B cell (primary cell): ENCODE measurements at regions of chr11 and their contacts with region 1.

Region 1: DNA sequence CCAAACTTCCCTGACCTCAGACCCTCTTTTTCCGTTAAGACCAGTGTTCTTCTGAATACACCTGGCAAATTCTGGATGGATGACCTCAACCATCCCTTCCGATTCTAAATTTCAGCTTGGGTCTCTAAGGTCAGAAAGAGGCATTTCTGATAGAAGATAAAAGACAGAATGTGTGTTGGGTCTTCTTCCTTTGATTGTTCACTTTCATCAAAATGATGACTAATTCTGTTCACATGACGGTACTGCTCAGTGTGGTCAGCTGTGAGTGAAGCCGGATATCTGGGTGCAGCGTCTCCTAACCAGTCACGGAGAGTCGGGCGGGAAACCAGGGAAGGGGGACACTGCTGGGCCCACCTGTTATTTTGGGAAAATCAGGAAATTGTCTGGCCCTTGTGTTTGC is 151.6 kb upstream of the NAV2 start:
- DNase-seq: no peak
- ATAC-seq: no peak
- H3K4me3 ChIP-seq: no peak overlapping the region
- H3K4me3 Mint-ChIP-seq: no peak overlapping the region
- H3K27ac ChIP-seq: no peak overlapping the region
- H3K27ac Mint-ChIP-seq: no peak overlapping the region
- H3K4me1 ChIP-seq: no peaks in the 10 kb centered on the region
- H3K4me1 Mint-ChIP-seq: peaks cover 1% of the 10 kb centered on the region
- H3K27me3 ChIP-seq: peaks cover 0 to 23% (median 7%) of the 10 kb centered on the region in 4 experiments
- H3K27me3 Mint-ChIP-seq: peaks cover 9% of the 10 kb centered on the region
- CTCF ChIP-seq: no peak

Region 2: DNA sequence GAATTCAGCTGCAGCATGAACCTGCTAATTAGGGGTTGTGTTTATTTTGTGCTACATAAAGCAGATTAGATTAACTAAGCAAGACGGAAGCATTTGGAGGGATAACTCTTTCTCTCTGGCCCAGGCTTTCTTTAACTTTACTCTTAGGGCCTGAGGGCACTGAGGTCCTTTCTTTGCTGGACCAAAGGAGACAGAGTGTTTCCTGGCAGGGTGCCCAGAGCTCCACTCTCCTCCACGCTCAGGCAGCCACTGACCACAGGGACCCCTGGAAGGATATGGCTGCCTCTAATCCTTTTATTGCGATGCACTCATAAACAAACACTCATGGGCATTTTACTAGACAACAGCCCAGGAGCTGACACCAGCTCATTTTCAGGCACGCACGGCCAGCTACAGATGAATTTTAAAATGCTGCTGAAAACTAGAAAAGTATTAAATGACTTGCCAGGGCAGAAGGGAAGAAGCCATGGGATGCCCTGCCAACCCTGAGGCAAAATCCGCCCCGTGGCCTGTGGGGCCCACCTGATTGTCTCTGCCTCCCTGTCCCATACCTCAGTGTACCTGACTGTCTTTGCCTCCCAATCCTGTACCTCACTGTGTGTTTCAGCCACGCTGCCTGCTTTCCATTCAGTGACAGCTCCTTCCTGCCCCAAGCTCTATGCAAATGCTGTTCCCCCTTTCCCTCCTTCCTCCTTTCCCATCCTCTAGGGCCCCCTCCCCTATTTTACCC is 40.9 kb before region 1 on chr11:
- CTCF ChIA-PET with region 1: no interaction called
- POLR2A ChIA-PET with region 1: no interaction called
- intact Hi-C with region 1: no loop called
- DNase-seq: no peak
- ATAC-seq: no peak
- H3K4me3 ChIP-seq: no peak overlapping the region
- H3K4me3 Mint-ChIP-seq: no peak overlapping the region
- H3K27ac ChIP-seq: no peak overlapping the region
- H3K27ac Mint-ChIP-seq: no peak overlapping the region
- H3K4me1 ChIP-seq: peaks cover 0 to under 1% of the 10 kb centered on the region in 2 donors
- H3K4me1 Mint-ChIP-seq: no peaks in the 10 kb centered on the region
- H3K27me3 ChIP-seq: peaks cover 0 to 5% (median under 1%) of the 10 kb centered on the region in 4 experiments
- H3K27me3 Mint-ChIP-seq: peaks cover 6% of the 10 kb centered on the region
- CTCF ChIP-seq: no peak

Region 3: GRCh38 chr11:19742588-19743292 is 181.7 kb after region 1 on chr11:
- CTCF ChIA-PET with region 1: interaction called, 46 read pairs
- POLR2A ChIA-PET with region 1: no interaction called
- intact Hi-C with region 1: loop called (anchors 1 kb)
- DNase-seq: peak; percentile 54
- ATAC-seq: peak; percentile 54
- H3K4me3 ChIP-seq: no peak overlapping the region
- H3K4me3 Mint-ChIP-seq: no peak overlapping the region
- H3K27ac ChIP-seq: no peak overlapping the region
- H3K27ac Mint-ChIP-seq: no peak overlapping the region
- H3K4me1 ChIP-seq: no peaks in the 10 kb centered on the region
- H3K4me1 Mint-ChIP-seq: no peaks in the 10 kb centered on the region
- H3K27me3 ChIP-seq: no peaks in the 10 kb centered on the region
- H3K27me3 Mint-ChIP-seq: peaks cover 16% of the 10 kb centered on the region
- CTCF ChIP-seq: peak; percentile 77

Region 4: DNA sequence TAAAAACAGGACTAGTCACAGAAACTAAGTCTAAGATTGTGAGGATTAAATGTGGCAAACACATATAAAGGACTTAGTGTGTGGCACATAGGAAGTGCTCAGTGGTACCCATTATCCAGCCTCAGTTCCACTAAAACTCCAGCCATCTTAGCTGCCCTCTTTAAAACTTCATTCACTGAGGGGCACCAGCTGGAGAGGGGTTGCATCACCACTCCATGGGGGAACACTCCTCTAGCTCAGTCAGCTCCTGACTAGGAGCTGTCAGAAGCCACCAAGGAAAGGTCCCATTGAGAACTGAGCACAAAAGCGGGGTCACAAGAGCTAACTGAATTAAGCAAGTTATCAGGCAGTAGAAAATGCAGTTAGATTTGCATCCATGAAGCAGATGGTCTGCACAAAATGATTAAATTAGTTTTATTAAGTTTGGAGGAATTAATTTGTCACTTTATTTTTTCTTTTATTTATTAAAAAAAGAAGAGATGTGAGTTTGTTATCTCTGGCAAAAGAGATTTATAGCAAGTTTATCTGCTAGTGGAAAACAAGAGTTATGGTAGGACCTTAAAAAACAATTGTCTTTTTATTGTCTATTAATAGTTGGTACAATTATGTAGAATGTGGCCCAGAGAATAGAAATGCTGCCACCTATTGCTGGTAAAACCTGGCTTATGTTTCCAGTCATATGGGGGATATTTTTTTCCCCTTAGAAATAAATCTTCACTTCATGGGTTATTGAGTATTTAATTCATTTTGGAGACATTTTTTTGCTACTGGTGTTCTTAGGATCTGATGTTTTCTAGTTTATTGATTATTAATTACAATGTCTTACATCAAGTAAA is 247.3 kb after region 1 on chr11:
- CTCF ChIA-PET with region 1: interaction called, 17 read pairs
- POLR2A ChIA-PET with region 1: no interaction called
- intact Hi-C with region 1: loop called (anchors 1 kb)
- DNase-seq: no peak
- ATAC-seq: no peak
- H3K4me3 ChIP-seq: no peak overlapping the region
- H3K4me3 Mint-ChIP-seq: no peak overlapping the region
- H3K27ac ChIP-seq: no peak overlapping the region
- H3K27ac Mint-ChIP-seq: no peak overlapping the region
- H3K4me1 ChIP-seq: no peaks in the 10 kb centered on the region
- H3K4me1 Mint-ChIP-seq: no peaks in the 10 kb centered on the region
- H3K27me3 ChIP-seq: no peaks in the 10 kb centered on the region
- H3K27me3 Mint-ChIP-seq: peaks cover 19% of the 10 kb centered on the region
- CTCF ChIP-seq: no peak

Region 5: GRCh38 chr11:19903620-19904069 is 342.6 kb after region 1 on chr11:
- CTCF ChIA-PET with region 1: interaction called, 32 read pairs
- POLR2A ChIA-PET with region 1: no interaction called
- intact Hi-C with region 1: no loop called
- DNase-seq: peak; percentile 39
- ATAC-seq: no peak
- H3K4me3 ChIP-seq: no peak overlapping the region
- H3K4me3 Mint-ChIP-seq: no peak overlapping the region
- H3K27ac ChIP-seq: no peak overlapping the region
- H3K27ac Mint-ChIP-seq: no peak overlapping the region
- H3K4me1 ChIP-seq: no peaks in the 10 kb centered on the region
- H3K4me1 Mint-ChIP-seq: no peaks in the 10 kb centered on the region
- H3K27me3 ChIP-seq: no peaks in the 10 kb centered on the region
- H3K27me3 Mint-ChIP-seq: no peaks in the 10 kb centered on the region
- CTCF ChIP-seq: peak; percentile 58